ENCODE measurements at regions of chr3 and their contacts with region 1.

Region 1: GRCh38 chr3:120567370-120568201 is 28.6 kb upstream of the NDUFB4 start:
- DNase-seq: peak in 6 of 7 donors; percentile 33 to 76 (median 54)
- H3K4me3 ChIP-seq: peak overlapping the region in 1 of 4 donors; percentile 39
- H3K27ac ChIP-seq: peak overlapping the region; percentile 66 to 84 (median 83)
- H3K4me1 ChIP-seq: peaks cover 21 to 35% of the 10 kb centered on the region in 2 donors
- H3K27me3 ChIP-seq: no peaks in the 10 kb centered on the region
- CTCF ChIP-seq: peak; percentile 38 to 56 (median 44)
- POLR2A ChIP-seq: peak in 1 of 2 donors; percentile 42

Region 2: DNA sequence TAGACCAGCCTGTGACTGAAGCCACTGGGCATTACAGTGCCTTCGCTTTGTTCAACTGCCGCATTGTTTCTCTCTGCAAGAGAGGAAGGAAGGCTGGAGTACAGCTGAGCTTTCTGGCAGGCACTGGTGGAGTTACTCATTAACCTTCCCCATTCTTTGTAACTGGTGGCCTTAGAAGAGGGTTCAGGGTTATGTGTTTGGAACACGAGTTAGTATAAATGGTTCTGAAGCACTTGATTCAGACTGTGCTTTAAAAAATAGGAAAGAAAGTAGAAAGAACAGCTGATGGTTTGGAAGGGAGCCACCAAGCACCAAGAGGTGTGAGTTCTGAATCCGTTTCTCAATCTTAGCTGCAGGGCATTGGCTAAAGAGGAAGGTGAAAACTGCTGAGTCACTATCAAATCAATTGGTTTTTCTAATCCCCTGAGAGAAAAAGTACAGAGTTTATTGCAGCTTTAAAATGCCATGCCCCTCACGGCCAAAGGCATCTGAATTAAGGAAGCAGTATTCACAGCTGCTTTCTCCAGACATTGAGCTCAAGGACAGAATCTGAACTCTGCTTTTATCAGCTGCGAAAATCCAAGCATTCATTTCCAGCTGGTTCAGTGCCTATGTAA is 110.9 kb after region 1 on chr3:
- intact Hi-C with region 1: no loop called
- DNase-seq: peak; percentile 57 to 88 (median 80)
- H3K4me3 ChIP-seq: peak overlapping the region in 1 of 4 donors; percentile 42
- H3K27ac ChIP-seq: peak overlapping the region; percentile 34 to 90 (median 81)
- H3K4me1 ChIP-seq: peaks cover 13 to 15% of the 10 kb centered on the region in 2 donors
- H3K27me3 ChIP-seq: no peaks in the 10 kb centered on the region
- CTCF ChIP-seq: no peak
- POLR2A ChIP-seq: peak in 1 of 2 donors; percentile 80

Region 3: GRCh38 chr3:120801484-120801883 is 233.9 kb after region 1 on chr3:
- intact Hi-C with region 1: loop called (anchors 5 kb)
- DNase-seq: no peak
- H3K4me3 ChIP-seq: no peak overlapping the region
- H3K27ac ChIP-seq: no peak overlapping the region
- H3K4me1 ChIP-seq: no peaks in the 10 kb centered on the region
- H3K27me3 ChIP-seq: no peaks in the 10 kb centered on the region
- CTCF ChIP-seq: no peak
- POLR2A ChIP-seq: no peak

Measured in adrenal gland (tissue), 19 donors.